CD8-positive, alpha-beta T cell (primary cell): ENCODE measurements at regions of chr11 and their contacts with region 1.

Region 1: DNA sequence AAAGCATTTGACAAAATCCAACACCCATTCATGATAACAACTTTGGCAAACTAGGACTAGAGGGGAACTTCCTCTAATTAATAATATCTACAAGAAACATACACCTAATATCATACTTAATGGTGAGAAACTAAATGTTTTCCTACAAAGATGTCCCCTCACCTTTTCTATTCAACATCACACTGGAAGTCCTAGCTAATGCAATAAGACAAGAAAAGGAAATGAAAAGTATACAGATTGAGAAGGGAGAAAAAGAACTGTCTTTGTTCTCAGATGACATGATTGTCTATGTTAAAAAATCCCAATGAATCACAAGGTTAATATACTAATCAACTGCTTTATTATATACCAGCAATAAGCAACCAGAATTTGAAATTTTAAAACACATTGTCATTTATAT is 52.4 kb downstream of the C11orf65 start:
- DNase-seq: no peak
- ATAC-seq: no peak
- H3K4me3 ChIP-seq: no peak overlapping the region
- H3K4me3 Mint-ChIP-seq: no peak overlapping the region
- H3K27ac ChIP-seq: no peak overlapping the region
- H3K27ac Mint-ChIP-seq: no peak overlapping the region
- H3K4me1 ChIP-seq: no peaks in the 10 kb centered on the region
- H3K4me1 Mint-ChIP-seq: no peaks in the 10 kb centered on the region
- H3K27me3 ChIP-seq: no peaks in the 10 kb centered on the region
- H3K27me3 Mint-ChIP-seq: no peaks in the 10 kb centered on the region
- CTCF ChIP-seq: no peak

Region 2: DNA sequence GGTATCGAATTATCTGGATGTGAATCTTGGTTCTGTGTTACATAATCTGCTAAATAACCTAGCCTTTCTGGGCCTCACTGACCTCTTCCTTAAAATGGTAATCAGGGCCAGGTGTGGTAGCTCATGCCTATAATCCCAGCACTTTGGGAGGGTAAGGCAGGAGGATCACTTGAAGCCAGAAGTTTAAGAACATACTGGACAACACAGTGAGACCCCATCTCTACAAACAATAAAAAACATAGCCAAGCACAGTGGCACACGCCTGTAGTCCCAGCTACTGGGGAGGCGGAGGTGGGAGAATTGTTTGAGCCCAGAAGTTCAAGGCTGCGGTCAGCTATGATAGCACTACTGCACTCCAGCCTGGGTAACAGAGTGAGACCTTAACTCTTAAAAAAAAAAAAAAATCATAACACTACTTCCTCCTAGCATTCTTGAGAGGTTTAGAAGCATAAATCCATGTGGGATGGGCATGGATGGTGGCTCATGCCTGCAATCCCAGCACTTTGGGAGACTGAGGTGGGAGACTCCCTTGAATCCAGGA is 20.1 kb before region 1 on chr11:
- CTCF ChIA-PET with region 1: no interaction called
- POLR2A ChIA-PET with region 1: no interaction called
- intact Hi-C with region 1: no loop called
- DNase-seq: no peak
- ATAC-seq: no peak
- H3K4me3 ChIP-seq: no peak overlapping the region
- H3K4me3 Mint-ChIP-seq: no peak overlapping the region
- H3K27ac ChIP-seq: no peak overlapping the region
- H3K27ac Mint-ChIP-seq: no peak overlapping the region
- H3K4me1 ChIP-seq: no peaks in the 10 kb centered on the region
- H3K4me1 Mint-ChIP-seq: no peaks in the 10 kb centered on the region
- H3K27me3 ChIP-seq: no peaks in the 10 kb centered on the region
- H3K27me3 Mint-ChIP-seq: no peaks in the 10 kb centered on the region
- CTCF ChIP-seq: no peak

Region 3: DNA sequence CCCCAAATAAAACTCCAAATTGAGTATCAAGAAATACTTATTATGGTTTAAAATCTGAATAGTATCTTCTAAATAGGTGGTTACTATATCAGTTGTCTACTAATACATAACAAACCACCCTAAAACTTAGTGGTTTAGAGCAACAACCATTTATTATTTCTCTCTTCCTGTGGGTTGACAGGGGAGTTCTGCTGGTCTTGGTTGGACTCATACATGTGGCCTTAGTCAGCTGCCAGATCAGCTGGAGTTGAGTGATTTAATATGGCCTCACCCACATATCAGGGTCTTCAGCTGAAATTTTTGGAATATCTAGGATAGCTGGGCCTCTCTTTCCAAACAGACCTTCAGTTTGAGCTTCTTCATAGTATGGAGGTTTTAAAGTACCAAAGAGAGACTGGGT is 17.8 kb after region 1 on chr11:
- CTCF ChIA-PET with region 1: no interaction called
- POLR2A ChIA-PET with region 1: no interaction called
- intact Hi-C with region 1: no loop called
- DNase-seq: no peak
- ATAC-seq: no peak
- H3K4me3 ChIP-seq: no peak overlapping the region
- H3K4me3 Mint-ChIP-seq: no peak overlapping the region
- H3K27ac ChIP-seq: no peak overlapping the region
- H3K27ac Mint-ChIP-seq: no peak overlapping the region
- H3K4me1 ChIP-seq: no peaks in the 10 kb centered on the region
- H3K4me1 Mint-ChIP-seq: no peaks in the 10 kb centered on the region
- H3K27me3 ChIP-seq: peaks cover 0 to 2% of the 10 kb centered on the region in 2 experiments
- H3K27me3 Mint-ChIP-seq: no peaks in the 10 kb centered on the region
- CTCF ChIP-seq: no peak

Region 4: GRCh38 chr11:110337570-110338193 is 1922.7 kb after region 1 on chr11:
- CTCF ChIA-PET with region 1: no interaction called
- POLR2A ChIA-PET with region 1: no interaction called
- intact Hi-C with region 1: loop called in 1 of 2 experiments (anchors 5 kb)
- DNase-seq: peak in 2 of 9 experiments; percentile 5 to 22
- ATAC-seq: no peak
- H3K4me3 ChIP-seq: no peak overlapping the region
- H3K4me3 Mint-ChIP-seq: no peak overlapping the region
- H3K27ac ChIP-seq: no peak overlapping the region
- H3K27ac Mint-ChIP-seq: no peak overlapping the region
- H3K4me1 ChIP-seq: no peaks in the 10 kb centered on the region
- H3K4me1 Mint-ChIP-seq: no peaks in the 10 kb centered on the region
- H3K27me3 ChIP-seq: no peaks in the 10 kb centered on the region
- H3K27me3 Mint-ChIP-seq: no peaks in the 10 kb centered on the region
- CTCF ChIP-seq: no peak